ENCODE measurements at regions of chr2 and their contacts with region 1.

Region 1: DNA sequence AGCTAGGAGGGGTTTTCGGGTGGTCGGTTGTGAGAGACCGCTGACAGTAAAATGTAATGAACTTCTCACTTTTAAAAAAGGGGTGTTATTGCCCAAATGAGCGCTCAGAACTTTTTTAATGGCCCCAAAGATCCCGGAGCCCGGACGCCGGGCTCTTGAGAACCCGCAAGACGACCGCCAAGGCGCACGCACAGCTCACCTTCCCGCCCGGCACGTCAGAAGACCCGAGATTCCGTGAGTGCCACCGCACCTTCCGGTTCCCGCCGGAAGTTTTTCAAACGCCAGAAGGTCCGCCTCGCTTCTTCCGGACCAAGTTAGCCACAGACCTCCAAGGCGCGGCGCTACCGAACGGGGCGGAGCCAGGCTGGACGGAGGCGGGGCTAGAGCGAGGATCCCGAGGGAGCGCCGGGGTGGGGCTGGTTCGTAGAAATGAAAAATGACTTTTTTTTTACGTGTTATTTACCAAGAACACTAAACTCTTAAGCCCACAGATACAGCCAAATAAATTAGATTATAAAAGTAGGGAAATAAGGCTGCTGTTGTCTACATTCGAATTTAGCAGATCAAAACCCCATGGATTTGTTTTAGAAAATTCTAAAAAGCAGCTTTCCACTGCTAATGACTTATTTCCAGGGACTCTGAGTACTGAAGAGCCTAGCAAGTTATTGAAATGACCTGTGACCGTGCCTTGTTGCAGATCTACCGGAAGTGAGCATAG is at the start of gene SRBD1:
- DNase-seq: peak; percentile 71
- H3K4me3 ChIP-seq: peak within 1 kb of the TSS; percentile 87
- H3K27ac ChIP-seq: peak within 1 kb of the TSS; percentile 62
- H3K27me3 ChIP-seq: no peaks in the 10 kb centered on the region
- CTCF ChIP-seq: no peak
- polyA plus RNA-seq, gene SRBD1: 7.2 and 8.7 TPM in 2 replicates

Region 2: GRCh38 chr2:44981136-44982108 is 629.8 kb before region 1 on chr2:
- CTCF ChIA-PET with region 1: interaction called, 10 read pairs
- POLR2A ChIA-PET with region 1: no interaction called
- DNase-seq: peak; percentile 55
- H3K4me3 ChIP-seq: no peak overlapping the region
- H3K27ac ChIP-seq: no peak overlapping the region
- H3K27me3 ChIP-seq: peaks cover 16% of the 10 kb centered on the region
- CTCF ChIP-seq: peak; percentile 86

Region 3: DNA sequence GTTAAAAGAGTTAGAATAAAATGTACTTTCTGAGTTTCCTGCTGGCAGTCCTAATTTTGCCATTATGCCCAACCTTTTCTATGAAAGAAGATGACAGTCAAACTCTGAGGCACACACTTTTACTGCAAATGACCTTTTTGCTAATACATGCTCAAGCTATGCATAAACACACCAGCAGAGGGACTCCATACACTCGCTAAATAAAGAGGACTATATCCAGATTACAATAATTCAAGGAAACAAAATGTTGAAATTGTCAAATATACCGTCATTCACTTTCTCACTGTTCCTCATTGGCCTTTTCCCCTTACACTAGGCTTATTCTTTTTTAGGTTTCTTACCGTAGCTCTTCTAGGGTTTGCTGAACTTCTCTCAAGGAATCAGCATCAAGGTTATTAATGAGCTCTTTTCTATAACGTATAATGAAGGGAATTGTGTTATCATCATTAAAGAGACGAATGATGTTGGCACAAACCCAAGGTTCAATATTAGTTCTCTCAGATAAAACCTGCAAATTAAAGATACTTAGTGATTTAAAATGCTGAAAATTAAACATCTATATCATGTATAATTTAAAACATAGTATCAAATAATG is 25.8 kb before region 1 on chr2:
- CTCF ChIA-PET with region 1: interaction called, 16 read pairs
- POLR2A ChIA-PET with region 1: no interaction called
- DNase-seq: no peak
- H3K4me3 ChIP-seq: no peak overlapping the region
- H3K27ac ChIP-seq: no peak overlapping the region
- H3K27me3 ChIP-seq: no peaks in the 10 kb centered on the region
- CTCF ChIP-seq: peak; percentile 87

Region 4: GRCh38 chr2:45595721-45596435 is 15.3 kb before region 1 on chr2:
- CTCF ChIA-PET with region 1: interaction called, 16 read pairs
- POLR2A ChIA-PET with region 1: no interaction called
- DNase-seq: no peak
- H3K4me3 ChIP-seq: no peak overlapping the region
- H3K27ac ChIP-seq: no peak overlapping the region
- H3K27me3 ChIP-seq: no peaks in the 10 kb centered on the region
- CTCF ChIP-seq: no peak